ENCODE measurements at regions of chr12 and their contacts with region 1.

Region 1: GRCh38 chr12:546921-547845 is 87.4 kb downstream of the B4GALNT3 start:
- DNase-seq: peak; percentile 96
- H3K4me3 ChIP-seq: peak overlapping the region; percentile 28 to 49
- H3K27ac ChIP-seq: no peak overlapping the region
- H3K4me1 ChIP-seq: peaks cover 0 to 13% of the 10 kb centered on the region in 2 experiments; a peak in 1 of 4 replicates
- H3K27me3 ChIP-seq: no peaks in the 10 kb centered on the region; the same call in 1 of the 2 replicates
- CTCF ChIP-seq: peak; percentile 95
- EP300 ChIP-seq: peak in 1 of 2 experiments; percentile 66; a peak in 2 of 4 replicates
- RAD21 ChIP-seq: peak; percentile 97

Region 2: DNA sequence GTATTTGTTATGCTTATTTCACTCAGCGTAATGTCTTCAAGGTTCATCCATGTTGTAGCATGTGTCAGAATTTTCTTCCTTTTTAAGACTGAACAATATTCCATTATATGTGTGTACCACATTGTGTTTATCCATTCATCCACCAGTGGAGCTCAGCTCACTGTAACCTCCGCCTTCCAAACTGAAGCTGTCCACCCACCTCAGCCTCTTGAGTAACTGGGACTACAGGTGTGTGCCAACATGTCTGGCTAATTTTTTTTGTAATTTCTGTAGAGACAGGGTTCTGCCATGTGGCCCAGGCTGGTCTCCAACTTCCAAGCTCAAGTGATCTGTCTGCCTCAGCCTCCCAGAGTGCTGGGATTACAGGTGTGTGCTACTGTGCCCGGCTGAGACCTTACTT is 124.7 kb before region 1 on chr12:
- CTCF ChIA-PET with region 1: interaction called, 15 read pairs
- POLR2A ChIA-PET with region 1: no interaction called
- DNase-seq: no peak
- H3K4me3 ChIP-seq: no peak overlapping the region
- H3K27ac ChIP-seq: no peak overlapping the region
- H3K4me1 ChIP-seq: no peaks in the 10 kb centered on the region
- H3K27me3 ChIP-seq: no peaks in the 10 kb centered on the region
- CTCF ChIP-seq: no peak
- EP300 ChIP-seq: no peak
- RAD21 ChIP-seq: no peak

Region 3: DNA sequence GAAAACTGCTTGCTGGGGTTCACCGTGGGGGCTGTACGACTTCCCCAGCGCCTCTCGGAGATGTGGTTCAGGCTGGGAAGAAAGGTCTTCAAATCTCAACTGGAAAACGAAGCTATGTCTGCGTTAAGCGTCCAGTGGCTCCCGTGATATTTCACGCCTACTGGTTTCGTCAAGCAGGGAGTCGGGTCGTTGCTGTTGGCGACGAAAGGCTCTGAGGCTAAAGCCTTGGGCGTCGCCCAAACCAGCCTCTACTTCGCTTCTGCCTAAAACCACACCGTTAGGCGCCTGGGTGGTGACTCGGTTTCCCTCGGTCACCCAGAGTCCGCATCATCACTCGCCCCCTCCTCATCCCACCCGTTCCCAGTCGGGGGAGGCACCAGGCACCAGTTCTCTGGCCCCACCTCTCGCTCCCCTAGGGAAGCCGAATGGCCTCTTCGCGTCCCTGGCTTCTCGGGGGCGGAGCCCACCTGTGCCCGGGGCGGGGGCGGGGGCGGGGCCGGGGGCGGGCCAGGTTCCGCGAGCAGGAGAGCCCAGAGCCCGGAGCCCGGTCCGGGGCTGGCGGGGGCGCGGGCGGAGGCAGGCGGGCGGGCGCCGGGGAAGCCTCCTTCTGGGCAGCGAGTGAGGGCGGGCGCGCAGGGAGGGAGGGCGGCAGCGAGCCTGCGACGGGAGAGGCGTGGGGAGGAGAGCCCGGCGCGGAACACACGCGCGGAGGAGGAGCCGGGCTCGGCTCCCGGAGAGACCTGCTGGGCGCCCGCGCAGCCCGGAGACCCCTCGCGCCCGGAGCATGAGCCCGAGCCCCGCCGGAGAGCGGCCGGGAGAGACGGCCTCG is 87.5 kb before region 1 on chr12 and contains the start of gene B4GALNT3:
- CTCF ChIA-PET with region 1: interaction called, 560 read pairs
- POLR2A ChIA-PET with region 1: no interaction called
- DNase-seq: peak; percentile 88
- H3K4me3 ChIP-seq: peak within 1 kb of the TSS; percentile 55
- H3K27ac ChIP-seq: no peak within 1 kb of the TSS
- H3K4me1 ChIP-seq: peaks cover 0 to 5% of the 10 kb centered on the region in 2 experiments; a peak in 1 of 4 replicates
- H3K27me3 ChIP-seq: peaks cover 47% of the 10 kb centered on the region
- CTCF ChIP-seq: no peak
- EP300 ChIP-seq: no peak
- RAD21 ChIP-seq: no peak
- polyA plus RNA-seq, gene B4GALNT3: 0.34 and 0.53 TPM in 2 replicates

Region 4: DNA sequence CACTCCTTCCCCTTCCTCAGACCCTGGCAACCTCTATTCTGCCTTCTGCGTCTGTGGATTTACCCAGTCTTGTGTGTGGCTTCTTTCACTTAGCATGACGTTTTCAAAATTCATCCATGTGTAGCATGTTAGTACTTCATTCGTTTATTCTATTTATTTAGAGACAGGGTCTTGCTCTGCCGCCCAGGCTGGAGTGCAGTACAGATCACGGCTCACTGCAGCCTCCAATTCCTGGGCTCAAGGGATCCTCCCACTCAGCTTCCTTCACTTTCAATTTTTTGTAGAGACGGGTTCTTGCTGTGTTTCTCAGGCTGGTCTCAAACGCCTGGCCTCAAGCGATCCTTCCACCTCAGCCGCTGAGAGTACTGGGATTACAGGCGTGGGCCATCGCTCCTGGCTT is 50.4 kb before region 1 on chr12:
- CTCF ChIA-PET with region 1: interaction called, 14 read pairs
- POLR2A ChIA-PET with region 1: no interaction called
- DNase-seq: no peak
- H3K4me3 ChIP-seq: no peak overlapping the region
- H3K27ac ChIP-seq: no peak overlapping the region
- H3K4me1 ChIP-seq: no peaks in the 10 kb centered on the region
- H3K27me3 ChIP-seq: peaks cover 32% of the 10 kb centered on the region; the same call in 1 of the 2 replicates
- CTCF ChIP-seq: no peak
- EP300 ChIP-seq: no peak
- RAD21 ChIP-seq: no peak

Region 5: DNA sequence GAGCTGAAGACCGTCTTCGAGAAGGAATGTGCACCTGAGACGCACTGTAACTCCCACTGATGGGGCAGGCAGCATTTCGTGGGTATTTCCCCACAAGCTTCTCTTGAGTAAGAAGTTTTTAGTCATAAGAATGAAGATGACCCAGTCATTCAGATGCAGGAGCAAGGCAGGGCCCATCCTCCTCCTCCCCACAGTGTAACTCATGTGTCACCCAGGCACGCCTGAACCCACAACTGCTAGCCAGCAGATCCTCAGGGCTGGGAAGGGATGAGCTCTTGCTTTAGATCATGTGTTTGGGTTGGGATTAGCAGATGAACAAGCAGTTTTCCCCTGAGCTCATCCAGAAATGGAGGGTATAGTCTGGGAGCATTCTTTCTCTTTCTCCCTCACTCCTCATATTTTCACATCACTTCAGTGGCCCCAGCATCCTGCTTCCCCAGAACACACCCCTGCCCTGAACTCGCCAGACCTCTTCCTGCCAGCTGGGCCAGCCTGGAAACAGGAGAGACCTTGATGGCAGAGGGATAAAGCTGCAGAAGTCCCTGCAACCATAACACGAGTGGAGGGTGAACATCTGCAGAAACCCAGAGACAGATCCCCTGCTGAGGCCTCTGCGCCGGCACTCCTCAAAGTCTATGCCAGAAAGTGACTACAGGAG is 14.1 kb before region 1 on chr12:
- CTCF ChIA-PET with region 1: interaction called, 51 read pairs
- POLR2A ChIA-PET with region 1: no interaction called
- DNase-seq: no peak
- H3K4me3 ChIP-seq: no peak overlapping the region
- H3K27ac ChIP-seq: no peak overlapping the region
- H3K4me1 ChIP-seq: no peaks in the 10 kb centered on the region; a peak in 1 of 4 replicates
- H3K27me3 ChIP-seq: no peaks in the 10 kb centered on the region; the same call in 1 of the 2 replicates
- CTCF ChIP-seq: no peak
- EP300 ChIP-seq: no peak
- RAD21 ChIP-seq: no peak

Region 6: GRCh38 chr12:569803-570434 is 22.7 kb after region 1 on chr12:
- CTCF ChIA-PET with region 1: interaction called, 23 read pairs
- POLR2A ChIA-PET with region 1: no interaction called
- DNase-seq: peak; percentile 98
- H3K4me3 ChIP-seq: peak overlapping the region; percentile 62 to 88
- H3K27ac ChIP-seq: peak overlapping the region; percentile 75 to 76
- H3K4me1 ChIP-seq: peaks cover 0 to 24% of the 10 kb centered on the region in 2 experiments; a peak in 2 of 4 replicates
- H3K27me3 ChIP-seq: no peaks in the 10 kb centered on the region
- CTCF ChIP-seq: peak; percentile 92
- EP300 ChIP-seq: no peak
- RAD21 ChIP-seq: peak; percentile 88